ENCODE measurements at regions of chr3 and their contacts with region 1.

Region 1: DNA sequence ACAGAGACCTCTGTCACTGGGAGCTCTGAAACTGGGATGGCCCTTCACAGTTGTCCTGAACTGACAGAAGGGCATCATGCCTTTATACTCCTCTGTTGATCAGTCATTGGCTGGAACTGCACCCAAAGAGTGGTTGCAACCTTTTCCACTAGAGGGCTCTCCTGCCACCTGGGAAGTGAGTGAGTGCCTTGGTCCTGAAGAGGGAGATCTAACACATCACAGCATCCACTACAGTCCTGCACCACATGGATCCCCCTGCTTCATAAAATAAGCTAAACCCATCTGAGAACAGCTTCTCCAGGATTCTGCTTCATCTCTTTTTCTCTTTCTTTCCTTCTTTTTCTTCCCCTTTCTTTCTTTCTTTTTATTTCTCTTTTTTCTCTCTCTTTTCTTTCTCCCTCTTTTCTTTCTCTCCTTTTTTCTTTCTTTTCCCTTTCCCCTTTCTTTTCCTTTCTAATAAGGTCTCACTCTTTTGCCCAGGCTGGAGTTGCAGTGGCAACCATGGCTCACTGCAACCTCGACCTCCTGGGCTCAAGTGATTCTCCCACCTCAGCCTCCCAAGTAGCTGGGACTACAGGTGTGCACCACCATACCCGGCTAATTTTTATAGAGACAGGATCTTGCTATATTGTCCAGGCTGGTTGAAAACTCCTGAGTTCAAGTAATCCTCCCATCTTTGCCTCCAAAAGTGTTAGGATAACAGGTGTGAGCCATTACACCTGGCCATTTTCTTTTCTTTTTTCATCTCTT is 42.8 kb upstream of the RAF1 start:
- DNase-seq: no peak
- H3K4me3 ChIP-seq: no peak overlapping the region
- CTCF ChIP-seq: peak; percentile 79

Region 2: DNA sequence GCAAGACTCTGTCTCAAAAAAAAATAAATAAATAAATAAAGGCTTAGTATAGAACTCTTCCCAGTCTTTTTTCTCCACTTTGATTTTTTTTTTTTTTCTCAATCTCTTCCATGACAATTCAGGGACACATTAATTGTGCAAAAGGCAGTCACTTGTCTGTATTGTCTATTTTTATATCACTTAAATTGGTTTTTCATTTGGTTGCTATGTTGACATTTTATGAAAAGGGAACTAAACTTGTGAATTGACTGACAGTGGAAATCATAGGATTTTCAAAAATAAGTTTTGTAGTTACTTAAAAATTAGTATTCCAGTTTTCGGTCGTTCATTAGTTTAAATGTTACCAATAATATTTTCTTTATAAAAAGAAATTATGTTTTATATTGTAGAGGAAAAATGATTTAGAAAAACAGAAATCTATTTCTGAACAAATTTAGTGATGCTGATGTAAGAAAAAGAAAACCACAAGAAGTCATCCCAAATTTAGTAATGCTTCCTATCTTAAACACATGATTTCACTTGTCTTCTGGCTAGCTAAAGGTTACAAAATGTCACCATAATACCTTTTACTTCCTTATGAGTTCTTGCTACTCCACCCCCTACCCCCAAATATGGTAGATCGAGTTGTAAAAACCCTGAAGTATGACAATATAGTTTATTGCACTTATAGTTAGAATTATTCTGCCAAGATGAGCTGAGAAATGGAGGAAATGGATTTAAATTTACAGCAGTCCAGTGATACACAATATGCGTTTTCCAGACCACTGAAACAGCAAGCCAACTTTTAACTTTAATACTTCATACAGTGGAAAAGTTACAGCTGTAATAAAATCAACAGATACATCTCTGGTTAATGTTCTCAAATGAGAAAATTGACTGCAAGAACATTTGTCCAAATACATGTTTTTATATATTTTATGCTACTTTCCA is 380.8 kb before region 1 on chr3:
- CTCF ChIA-PET with region 1: no interaction called
- POLR2A ChIA-PET with region 1: no interaction called
- DNase-seq: no peak
- H3K4me3 ChIP-seq: no peak overlapping the region
- CTCF ChIP-seq: no peak

Region 3: GRCh38 chr3:12687962-12688361 is 18.7 kb before region 1 on chr3:
- CTCF ChIA-PET with region 1: interaction called, 10 read pairs
- POLR2A ChIA-PET with region 1: no interaction called
- DNase-seq: no peak
- H3K4me3 ChIP-seq: no peak overlapping the region
- CTCF ChIP-seq: no peak

Region 4: GRCh38 chr3:12695112-12695511 is 11.6 kb before region 1 on chr3:
- CTCF ChIA-PET with region 1: interaction called, 68 read pairs
- POLR2A ChIA-PET with region 1: interaction called, 3 read pairs
- DNase-seq: no peak
- H3K4me3 ChIP-seq: no peak overlapping the region
- CTCF ChIP-seq: no peak

Region 5: GRCh38 chr3:12719984-12720898 is 13.6 kb after region 1 on chr3:
- CTCF ChIA-PET with region 1: interaction called, 77 read pairs
- POLR2A ChIA-PET with region 1: no interaction called
- DNase-seq: no peak
- H3K4me3 ChIP-seq: peak overlapping the region; percentile 47
- CTCF ChIP-seq: peak; percentile 80

Measured in AG04449 (cell line).